ENCODE measurements at regions of chr1 and their contacts with region 1.

Region 1: GRCh38 chr1:173476664-173477285 is 360 bp upstream of the PRDX6 start:
- DNase-seq: peak; percentile 92
- ATAC-seq: peak; percentile 85
- H3K4me3 Mint-ChIP-seq: peak overlapping the region; percentile 89
- H3K27ac Mint-ChIP-seq: peak overlapping the region; percentile 91
- H3K4me1 Mint-ChIP-seq: peaks cover 58% of the 10 kb centered on the region
- H3K27me3 Mint-ChIP-seq: no peaks in the 10 kb centered on the region

Region 2: GRCh38 chr1:171781176-171781875 is 1695.4 kb before region 1 on chr1 and contains the start of gene METTL13:
- CTCF ChIA-PET with region 1: no interaction called
- POLR2A ChIA-PET with region 1: no interaction called
- intact Hi-C with region 1: loop called in 1 of 2 experiments (anchors 5 kb)
- DNase-seq: peak; percentile 99
- ATAC-seq: peak; percentile 97
- H3K4me3 Mint-ChIP-seq: peak within 1 kb of the TSS; percentile 92
- H3K27ac Mint-ChIP-seq: peak within 1 kb of the TSS; percentile 97
- H3K4me1 Mint-ChIP-seq: peaks cover 57% of the 10 kb centered on the region
- H3K27me3 Mint-ChIP-seq: no peaks in the 10 kb centered on the region
- total RNA-seq, gene METTL13: 41.1 to 52.9 TPM

Region 3: GRCh38 chr1:173355281-173356031 is 121.3 kb before region 1 on chr1:
- CTCF ChIA-PET with region 1: no interaction called
- POLR2A ChIA-PET with region 1: no interaction called
- intact Hi-C with region 1: no loop called
- DNase-seq: peak; percentile 13
- ATAC-seq: peak; percentile 71
- H3K4me3 Mint-ChIP-seq: no peak overlapping the region
- H3K27ac Mint-ChIP-seq: no peak overlapping the region
- H3K4me1 Mint-ChIP-seq: peaks cover 26% of the 10 kb centered on the region
- H3K27me3 Mint-ChIP-seq: no peaks in the 10 kb centered on the region

Region 4: DNA sequence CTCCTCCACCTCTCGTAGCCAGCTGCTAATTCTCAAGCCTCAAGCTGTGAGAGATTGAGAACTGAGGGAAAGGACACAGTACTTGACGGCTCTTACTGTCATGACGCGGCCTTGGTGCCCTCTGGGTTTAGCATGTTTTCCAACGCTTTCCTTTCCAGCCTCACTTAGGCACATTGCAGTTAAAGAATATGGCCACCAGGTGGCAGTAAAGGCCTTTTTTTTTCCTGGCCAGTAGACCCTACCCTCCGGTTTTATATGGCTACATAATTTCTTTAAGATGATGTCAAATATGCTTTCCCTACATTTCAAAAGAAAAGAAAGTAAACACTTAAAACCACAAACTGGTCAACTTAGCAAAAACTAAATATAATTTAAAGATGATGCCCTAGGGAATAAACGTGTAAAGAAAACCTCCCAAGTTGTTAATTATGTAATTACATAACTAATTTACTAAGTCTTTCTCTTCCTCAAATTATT is 56.4 kb before region 1 on chr1:
- CTCF ChIA-PET with region 1: interaction called, 5 read pairs
- POLR2A ChIA-PET with region 1: no interaction called
- intact Hi-C with region 1: loop called in 1 of 2 experiments (anchors 2 kb)
- DNase-seq: peak; percentile 69
- ATAC-seq: peak; percentile 91
- H3K4me3 Mint-ChIP-seq: no peak overlapping the region
- H3K27ac Mint-ChIP-seq: no peak overlapping the region
- H3K4me1 Mint-ChIP-seq: peaks cover 3% of the 10 kb centered on the region
- H3K27me3 Mint-ChIP-seq: no peaks in the 10 kb centered on the region

Region 5: DNA sequence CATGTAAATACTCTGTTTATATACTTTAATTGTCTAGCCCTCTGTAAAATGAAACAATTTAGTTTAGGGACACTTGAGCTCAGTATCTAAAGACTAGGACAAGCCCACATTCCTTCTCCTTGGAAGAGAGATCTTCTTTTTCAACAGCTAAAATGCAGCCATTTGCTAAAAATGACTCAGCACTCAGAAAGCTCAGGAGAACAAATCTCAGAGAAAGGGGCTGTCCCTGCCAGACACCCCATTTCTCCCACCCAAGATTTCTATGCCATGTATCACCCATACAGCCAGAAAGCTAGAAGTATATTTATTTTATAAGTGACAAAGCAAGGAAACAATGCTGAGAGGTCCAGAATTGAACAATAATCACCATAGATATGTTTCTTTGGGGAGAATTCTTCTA is 22.8 kb before region 1 on chr1:
- CTCF ChIA-PET with region 1: no interaction called
- POLR2A ChIA-PET with region 1: no interaction called
- intact Hi-C with region 1: loop called in 1 of 2 experiments (anchors 2 kb)
- DNase-seq: no peak
- ATAC-seq: no peak
- H3K4me3 Mint-ChIP-seq: no peak overlapping the region
- H3K27ac Mint-ChIP-seq: no peak overlapping the region
- H3K4me1 Mint-ChIP-seq: peaks cover 16% of the 10 kb centered on the region
- H3K27me3 Mint-ChIP-seq: no peaks in the 10 kb centered on the region

Region 6: DNA sequence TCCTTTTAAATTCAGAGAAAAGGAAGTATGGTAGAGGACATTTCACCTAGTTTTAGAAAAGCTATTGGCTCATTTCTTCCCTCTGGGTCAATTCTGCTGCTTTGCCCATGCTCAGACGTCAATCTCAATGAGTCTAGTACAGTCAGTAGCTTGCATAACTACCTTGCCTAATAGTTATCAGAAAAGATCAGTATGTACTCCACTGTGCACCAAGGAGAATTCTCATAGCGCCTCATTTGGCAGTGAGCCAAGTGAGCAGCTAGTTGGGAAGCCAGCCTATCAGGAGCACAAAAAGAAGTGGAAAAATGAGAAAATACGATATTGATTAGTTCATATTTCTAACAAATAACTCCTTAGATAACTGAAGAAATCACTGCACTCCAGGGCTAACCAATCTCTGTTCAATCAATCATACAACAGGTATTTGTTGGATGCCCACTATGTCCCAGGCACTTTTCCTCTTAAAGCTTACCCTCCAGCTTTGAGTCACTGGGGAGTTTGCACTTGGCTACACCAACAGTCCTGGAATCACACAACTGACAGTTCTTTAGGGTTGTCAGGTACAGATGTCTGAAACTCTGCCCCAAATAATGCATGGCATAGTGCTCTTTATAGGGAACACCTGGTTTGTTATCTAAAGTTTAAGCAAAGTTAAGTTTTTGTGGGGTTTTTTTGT is 50.5 kb after region 1 on chr1:
- CTCF ChIA-PET with region 1: no interaction called
- POLR2A ChIA-PET with region 1: no interaction called
- intact Hi-C with region 1: no loop called
- DNase-seq: no peak
- ATAC-seq: no peak
- H3K4me3 Mint-ChIP-seq: no peak overlapping the region
- H3K27ac Mint-ChIP-seq: no peak overlapping the region
- H3K4me1 Mint-ChIP-seq: peaks cover 11% of the 10 kb centered on the region
- H3K27me3 Mint-ChIP-seq: no peaks in the 10 kb centered on the region

Region 7: DNA sequence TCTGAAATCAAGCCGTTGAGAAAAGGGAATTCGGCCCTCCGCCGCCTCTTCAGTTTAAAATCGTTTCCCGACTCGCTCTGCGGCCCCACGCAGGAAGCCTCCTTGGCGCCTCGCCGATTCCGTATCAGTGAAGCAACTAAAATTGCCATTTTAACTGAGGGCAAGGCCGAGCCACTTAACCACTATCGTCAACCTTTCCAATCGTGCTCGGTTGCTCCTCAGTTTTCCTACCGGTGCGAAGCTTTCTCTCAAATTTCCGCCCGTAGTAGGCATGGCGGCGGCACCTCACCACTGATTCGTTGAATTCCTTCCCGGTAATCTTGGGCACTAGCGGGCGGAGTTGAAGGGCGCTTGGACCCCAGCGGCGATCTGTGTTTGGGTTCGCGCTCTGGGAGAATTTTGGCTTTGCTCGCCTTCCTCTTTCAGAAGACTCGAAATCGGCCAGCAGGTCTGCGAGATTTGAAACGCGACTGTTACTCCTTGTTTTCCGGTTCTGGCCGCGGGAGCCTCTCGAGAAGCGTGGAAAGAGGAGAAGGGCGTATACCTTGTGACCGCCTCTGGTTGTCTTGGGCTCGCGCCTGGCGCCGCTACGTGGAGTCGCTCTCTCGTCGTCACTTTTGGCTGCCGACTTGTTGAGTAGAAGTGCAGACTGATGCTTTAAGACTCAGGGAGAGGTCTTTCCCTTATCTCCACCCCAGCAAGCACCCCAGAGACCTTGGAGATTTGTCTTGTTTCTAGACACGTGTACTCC is 347.7 kb after region 1 on chr1 and contains the starts of genes CENPL and DARS2:
- CTCF ChIA-PET with region 1: interaction called, 10 read pairs
- POLR2A ChIA-PET with region 1: no interaction called
- intact Hi-C with region 1: loop called (anchors 1 to 2 kb)
- DNase-seq: peak; percentile 94
- ATAC-seq: peak; percentile 86
- H3K4me3 Mint-ChIP-seq: peak within 1 kb of the TSS; percentile 94
- H3K27ac Mint-ChIP-seq: peak within 1 kb of the TSS; percentile 99
- H3K4me1 Mint-ChIP-seq: peaks cover 55% of the 10 kb centered on the region
- H3K27me3 Mint-ChIP-seq: no peaks in the 10 kb centered on the region
- total RNA-seq, gene CENPL: 26.1 to 27.2 TPM
- total RNA-seq, gene DARS2: 57.2 to 62.0 TPM

Region 8: DNA sequence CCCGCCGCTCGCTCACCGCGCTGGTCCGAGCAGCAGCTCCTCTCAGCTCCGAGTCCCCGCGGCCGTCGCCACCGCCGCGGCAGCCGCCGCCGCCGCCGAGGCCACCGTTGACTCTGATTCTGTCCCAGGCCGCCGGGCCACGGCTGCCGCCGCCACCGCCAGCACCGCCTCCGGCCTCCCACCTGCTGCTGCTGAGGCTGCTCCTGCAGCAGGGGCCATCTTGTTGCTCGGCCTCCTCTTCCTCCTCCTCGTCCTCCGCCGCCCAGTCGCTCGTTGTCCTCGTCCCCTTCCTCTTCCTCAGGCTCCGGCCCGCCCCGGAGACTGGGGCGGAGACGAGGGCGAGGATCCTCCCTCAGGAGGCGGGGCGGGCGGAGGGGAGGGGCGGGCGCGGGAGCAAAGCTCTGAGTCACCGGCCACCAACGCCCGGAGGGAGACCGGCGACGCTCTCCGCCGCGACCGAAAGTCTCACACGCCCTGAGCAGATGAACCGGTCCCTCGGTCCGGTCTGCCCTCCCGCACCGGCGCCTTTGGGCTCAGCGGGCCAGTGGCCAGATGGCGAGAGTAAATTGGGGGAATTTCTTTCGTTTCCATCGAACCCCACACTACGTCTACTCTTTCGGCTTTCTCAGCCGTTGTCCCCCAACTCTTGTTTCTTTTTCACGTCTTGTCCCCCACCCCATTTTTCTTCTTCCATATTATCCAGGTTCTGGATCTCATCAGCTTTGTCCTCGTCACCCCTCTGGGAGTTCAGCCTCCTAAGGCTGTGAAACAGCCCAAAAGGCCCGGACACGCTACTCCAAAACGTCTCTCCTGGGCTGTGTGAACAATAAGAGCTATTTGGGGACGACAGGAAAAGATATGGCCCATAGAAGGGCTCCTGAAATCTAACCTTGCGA is 545.6 kb after region 1 on chr1 and contains the start of gene RC3H1:
- CTCF ChIA-PET with region 1: no interaction called
- POLR2A ChIA-PET with region 1: no interaction called
- intact Hi-C with region 1: loop called in 1 of 2 experiments (anchors 1 kb)
- DNase-seq: peak; percentile 96
- ATAC-seq: peak; percentile 91
- H3K4me3 Mint-ChIP-seq: peak within 1 kb of the TSS; percentile 87
- H3K27ac Mint-ChIP-seq: peak within 1 kb of the TSS; percentile 96
- H3K4me1 Mint-ChIP-seq: peaks cover 31% of the 10 kb centered on the region
- H3K27me3 Mint-ChIP-seq: no peaks in the 10 kb centered on the region
- total RNA-seq, gene RC3H1: 27.3 to 37.0 TPM

Region 9: DNA sequence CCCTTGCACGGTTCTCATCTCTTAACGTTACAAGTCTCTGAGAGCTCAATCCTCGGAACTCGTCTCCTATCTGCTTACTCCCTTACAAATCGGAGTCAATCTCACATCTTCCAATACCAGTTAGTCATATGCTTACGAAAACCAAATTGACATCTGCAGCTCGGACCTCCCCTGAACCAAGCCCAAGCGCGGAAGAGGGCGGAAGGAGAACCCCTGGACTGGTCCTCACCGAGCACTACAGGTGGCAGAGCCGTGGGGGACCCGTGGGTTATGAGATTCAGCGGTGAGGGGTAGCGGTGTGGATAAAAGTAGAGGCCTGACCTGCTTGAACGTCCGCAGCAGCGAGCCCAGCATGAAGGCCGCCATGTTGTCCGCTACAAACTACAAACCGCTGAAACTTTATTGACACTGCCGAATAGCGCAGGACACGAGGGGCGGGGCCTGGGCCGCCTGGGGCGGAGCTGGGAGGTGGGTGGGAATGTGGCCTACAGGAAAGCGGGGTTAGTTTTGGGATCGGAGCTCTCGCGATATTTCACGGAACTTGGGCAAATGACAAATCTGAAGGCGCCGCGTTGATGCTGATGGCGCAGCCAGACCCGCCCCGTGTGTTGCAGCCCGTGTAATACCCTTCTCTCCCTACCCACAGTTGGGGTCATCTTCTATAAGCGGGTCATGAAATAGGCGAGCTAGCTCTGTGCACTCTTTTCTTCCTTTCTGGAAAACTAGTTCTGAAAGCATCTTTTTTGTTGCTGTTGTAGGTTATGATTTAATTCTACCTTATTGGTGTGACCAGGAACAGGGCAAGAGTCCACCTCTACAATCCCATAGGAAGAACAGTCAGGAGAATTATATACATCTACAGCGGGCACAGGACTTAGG is 1546.5 kb after region 1 on chr1 and contains the start of gene MRPS14:
- CTCF ChIA-PET with region 1: no interaction called
- POLR2A ChIA-PET with region 1: no interaction called
- intact Hi-C with region 1: loop called in 1 of 2 experiments (anchors 2 kb)
- DNase-seq: peak; percentile 99
- ATAC-seq: peak; percentile 92
- H3K4me3 Mint-ChIP-seq: peak within 1 kb of the TSS; percentile 87
- H3K27ac Mint-ChIP-seq: peak within 1 kb of the TSS; percentile 92
- H3K4me1 Mint-ChIP-seq: peaks cover 25% of the 10 kb centered on the region
- H3K27me3 Mint-ChIP-seq: no peaks in the 10 kb centered on the region
- total RNA-seq, gene MRPS14: 38.7 to 43.7 TPM